GM12878 (cell line): ENCODE measurements at regions of chr14 and their contacts with region 1.

Region 1: DNA sequence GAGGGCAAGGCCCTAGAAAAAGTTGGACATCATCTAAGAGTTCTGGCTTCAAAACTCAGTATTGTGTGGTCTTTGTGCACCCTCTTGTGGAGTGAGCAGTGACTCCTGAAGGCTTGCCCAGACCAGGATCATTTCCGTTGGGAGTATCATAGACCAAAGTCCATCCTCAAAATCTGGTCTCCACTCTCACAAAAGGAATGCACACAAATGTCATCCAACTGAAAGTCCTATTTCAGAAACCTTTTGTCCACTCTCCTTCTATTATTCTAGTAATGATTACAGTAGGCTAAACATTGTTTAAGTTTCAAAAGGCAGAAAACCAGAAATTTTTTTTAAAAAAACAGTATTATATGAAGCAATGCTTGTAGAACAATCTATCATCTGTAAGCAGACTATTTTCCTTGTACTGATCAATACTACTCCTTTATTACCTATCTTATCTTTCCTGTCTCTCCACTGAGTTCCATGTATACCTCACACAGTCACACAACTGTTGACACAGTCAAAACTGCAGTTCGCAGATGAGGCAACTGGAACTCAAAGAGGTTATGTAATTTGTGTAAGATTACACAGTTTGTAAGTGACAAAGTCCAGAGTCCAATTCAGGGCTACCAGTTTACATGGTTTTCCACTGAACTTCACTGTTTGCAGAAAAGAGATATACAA is 41.4 kb downstream of the COX16 start:
- DNase-seq: peak; percentile 2
- ATAC-seq: peak; percentile 71
- H3K4me3 ChIP-seq: no peak overlapping the region
- H3K27ac ChIP-seq: no peak overlapping the region
- H3K4me1 ChIP-seq: no peaks in the 10 kb centered on the region
- H3K27me3 ChIP-seq: no peaks in the 10 kb centered on the region
- CTCF ChIP-seq: peak; percentile 37 to 57 (median 38); a peak in 4 of 6 replicates
- EP300 ChIP-seq: no peak
- POLR2A ChIP-seq: no peak
- RAD21 ChIP-seq: peak; percentile 67

Region 2: DNA sequence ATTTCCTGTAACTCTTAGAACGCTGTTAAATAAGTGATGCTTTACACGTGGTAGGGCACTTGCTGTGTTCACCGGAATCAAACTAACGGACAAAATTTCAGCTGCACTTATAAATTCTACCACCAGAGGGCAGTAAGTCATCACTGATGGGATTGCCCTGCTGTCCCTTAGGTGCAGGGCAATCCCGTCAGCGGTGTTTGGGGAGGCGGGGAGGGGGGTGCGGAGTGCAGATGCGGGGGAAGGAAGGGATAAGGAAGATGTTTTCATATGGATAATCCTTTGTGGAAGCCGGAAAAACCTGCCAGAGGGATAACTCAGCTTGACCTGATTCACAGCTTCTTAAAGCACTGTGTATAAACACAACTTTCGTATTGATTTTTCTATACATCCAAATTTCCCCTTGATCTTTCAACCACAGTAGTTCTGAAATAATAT is 499.3 kb before region 1 on chr14:
- CTCF ChIA-PET with region 1: no interaction called
- POLR2A ChIA-PET with region 1: no interaction called
- RAD21 ChIA-PET with region 1: no interaction called
- SMC1A ChIA-PET with region 1: no interaction called
- in situ Hi-C with region 1: no loop called
- intact Hi-C with region 1: loop called (anchors 5 kb)
- DNase-seq: peak; percentile 55
- ATAC-seq: peak; percentile 95
- H3K4me3 ChIP-seq: no peak overlapping the region
- H3K27ac ChIP-seq: no peak overlapping the region
- H3K4me1 ChIP-seq: no peaks in the 10 kb centered on the region
- H3K27me3 ChIP-seq: no peaks in the 10 kb centered on the region; a peak in 1 of 4 replicates
- CTCF ChIP-seq: peak; percentile 71 to 79 (median 75)
- EP300 ChIP-seq: no peak
- POLR2A ChIP-seq: no peak
- RAD21 ChIP-seq: peak; percentile 99

Region 3: GRCh38 chr14:70303545-70304293 is 14.4 kb before region 1 on chr14:
- CTCF ChIA-PET with region 1: no interaction called
- POLR2A ChIA-PET with region 1: no interaction called
- RAD21 ChIA-PET with region 1: no interaction called
- SMC1A ChIA-PET with region 1: no interaction called
- in situ Hi-C with region 1: no loop called
- intact Hi-C with region 1: no loop called
- DNase-seq: no peak
- ATAC-seq: no peak
- H3K4me3 ChIP-seq: no peak overlapping the region
- H3K27ac ChIP-seq: no peak overlapping the region
- H3K4me1 ChIP-seq: no peaks in the 10 kb centered on the region
- H3K27me3 ChIP-seq: no peaks in the 10 kb centered on the region
- CTCF ChIP-seq: no peak
- EP300 ChIP-seq: no peak
- POLR2A ChIP-seq: no peak
- RAD21 ChIP-seq: no peak

Region 4: DNA sequence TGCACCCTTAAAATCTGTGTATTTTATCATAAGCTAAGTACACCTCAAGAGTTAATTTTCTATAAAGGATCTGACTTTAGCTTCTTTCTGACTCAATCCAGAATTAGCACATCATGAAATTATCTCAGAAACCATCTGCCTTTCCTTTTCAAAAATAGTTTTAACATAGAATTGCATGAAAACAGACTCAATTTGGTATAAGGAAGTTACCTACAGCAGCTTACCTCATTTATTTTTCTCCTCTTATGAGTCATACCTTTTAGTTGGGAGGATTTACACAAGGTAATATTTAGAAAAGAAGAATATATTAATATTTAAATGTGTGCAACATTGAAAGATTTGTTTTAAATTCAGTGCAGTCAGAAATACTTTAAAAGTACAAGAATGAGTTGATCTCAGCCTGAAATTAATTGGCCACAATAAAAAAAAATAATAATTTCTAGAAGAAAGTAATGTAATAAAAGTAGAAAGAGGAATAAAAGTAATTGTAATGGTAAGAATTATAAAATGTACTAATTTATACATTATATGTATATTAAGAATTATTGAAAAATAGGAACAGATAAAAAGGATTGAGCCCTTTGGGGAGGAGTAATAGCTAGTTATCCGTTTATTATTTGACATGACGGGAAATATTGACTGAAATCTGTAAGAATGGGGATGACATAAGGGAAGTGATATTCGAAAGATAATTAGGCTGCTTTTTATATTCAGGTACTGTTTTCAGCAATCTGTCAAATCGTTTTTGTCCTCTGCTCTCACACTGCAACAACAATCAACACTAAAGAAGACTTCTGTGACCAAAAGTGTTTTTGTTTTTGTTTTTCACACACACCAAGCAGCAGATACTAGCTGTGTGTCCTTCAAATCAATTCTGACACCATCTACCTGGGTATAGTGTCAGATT is 154.4 kb after region 1 on chr14:
- CTCF ChIA-PET with region 1: no interaction called
- POLR2A ChIA-PET with region 1: no interaction called
- RAD21 ChIA-PET with region 1: no interaction called
- SMC1A ChIA-PET with region 1: no interaction called
- in situ Hi-C with region 1: no loop called
- intact Hi-C with region 1: no loop called
- DNase-seq: peak; percentile 20
- ATAC-seq: peak; percentile 80
- H3K4me3 ChIP-seq: no peak overlapping the region
- H3K27ac ChIP-seq: no peak overlapping the region
- H3K4me1 ChIP-seq: peaks cover 4% of the 10 kb centered on the region; the same call in 1 of the 2 replicates
- H3K27me3 ChIP-seq: no peaks in the 10 kb centered on the region
- CTCF ChIP-seq: no peak
- EP300 ChIP-seq: peak; percentile 61 to 76; a peak in 3 of 4 replicates
- POLR2A ChIP-seq: no peak
- RAD21 ChIP-seq: no peak

Region 5: DNA sequence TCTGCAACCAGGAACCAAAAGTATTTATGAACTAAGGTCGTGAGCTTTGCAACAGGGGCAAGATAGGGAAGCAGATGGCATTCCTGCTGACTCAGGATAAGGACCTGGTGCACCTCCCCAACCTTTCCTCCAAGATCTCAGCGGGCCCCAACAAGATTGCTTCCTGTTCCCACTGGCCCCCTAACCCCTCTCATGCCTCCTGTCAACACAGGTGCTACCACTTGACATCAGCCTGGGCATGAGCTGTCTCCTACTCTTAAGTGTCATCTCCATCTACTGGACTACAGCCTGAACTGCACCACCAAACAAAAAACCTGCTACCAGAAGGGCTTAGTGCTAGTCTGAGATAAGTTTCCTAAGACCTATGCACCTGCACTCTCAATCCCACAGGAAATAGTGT is 249.7 kb after region 1 on chr14:
- CTCF ChIA-PET with region 1: no interaction called
- POLR2A ChIA-PET with region 1: no interaction called
- RAD21 ChIA-PET with region 1: interaction called, 3 read pairs
- SMC1A ChIA-PET with region 1: no interaction called
- in situ Hi-C with region 1: no loop called
- intact Hi-C with region 1: loop called (anchors 2 kb)
- DNase-seq: no peak
- ATAC-seq: peak; percentile 94
- H3K4me3 ChIP-seq: no peak overlapping the region
- H3K27ac ChIP-seq: no peak overlapping the region
- H3K4me1 ChIP-seq: no peaks in the 10 kb centered on the region
- H3K27me3 ChIP-seq: no peaks in the 10 kb centered on the region
- CTCF ChIP-seq: peak; percentile 57 to 64 (median 58)
- EP300 ChIP-seq: no peak
- POLR2A ChIP-seq: no peak
- RAD21 ChIP-seq: peak; percentile 73